Gastrocnemius medialis (tissue), 4 donors: ENCODE measurements at regions of chr7 and their contacts with region 1.

Region 1: GRCh38 chr7:143380255-143380645 is 895 bp upstream of the ZYX start:
- DNase-seq: peak; percentile 66 to 82
- ATAC-seq: peak; percentile 60 to 63
- H3K4me3 ChIP-seq: peak overlapping the region; percentile 78 to 99 (median 86)
- H3K27ac ChIP-seq: peak overlapping the region; percentile 92 to 100 (median 98)
- H3K4me1 ChIP-seq: peaks cover 44 to 47% of the 10 kb centered on the region in 2 donors
- H3K27me3 ChIP-seq: no peaks in the 10 kb centered on the region
- CTCF ChIP-seq: peak; percentile 89 to 95 (median 91)
- POLR2A ChIP-seq: no peak

Region 2: DNA sequence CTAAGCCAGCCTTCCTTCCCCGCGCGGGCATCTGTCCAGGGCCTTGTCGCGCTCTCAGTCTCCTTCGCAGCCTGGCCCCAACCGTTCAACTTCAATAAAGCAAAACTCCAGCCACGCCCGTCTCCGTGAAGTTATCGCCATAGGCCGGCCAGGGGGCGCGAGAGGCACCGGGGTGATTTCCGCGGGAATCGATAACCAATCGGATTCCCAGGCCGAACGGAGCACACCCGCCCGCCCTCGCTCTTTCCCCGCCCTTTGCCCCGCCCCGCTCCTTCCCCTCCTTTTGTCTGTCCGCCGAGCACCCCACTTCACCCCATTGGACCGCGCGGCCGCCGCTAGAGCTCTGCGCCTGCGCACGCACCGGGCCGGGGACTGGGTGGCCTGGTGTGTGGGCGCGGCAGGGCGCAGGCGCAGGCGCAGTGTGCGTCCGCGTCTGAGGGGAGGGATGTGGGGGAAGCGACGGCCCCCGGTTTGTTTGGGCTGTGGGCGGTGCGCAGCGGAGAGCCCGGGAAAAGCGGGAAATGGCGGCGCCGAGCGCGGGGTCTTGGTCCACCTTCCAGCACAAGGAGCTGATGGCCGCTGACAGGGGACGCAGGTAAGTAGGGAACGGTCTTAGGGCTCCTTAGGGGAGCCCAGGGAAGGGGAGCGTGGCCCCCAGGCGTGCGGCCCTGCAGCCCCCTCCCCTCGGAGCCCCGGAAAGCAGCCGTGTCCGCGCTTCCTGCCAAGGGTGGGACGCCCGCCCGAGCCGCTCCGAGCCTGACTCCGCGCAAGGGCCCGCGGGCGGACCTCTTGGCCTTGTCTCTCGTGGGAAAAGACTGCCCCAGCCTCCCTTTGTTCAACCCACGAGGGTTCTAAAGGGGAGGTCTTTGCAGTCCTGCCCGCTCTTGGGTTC is 92.1 kb before region 1 on chr7 and contains the start of gene CASP2:
- in situ Hi-C with region 1: no loop called
- intact Hi-C with region 1: loop called (anchors 2 kb)
- DNase-seq: peak; percentile 94
- ATAC-seq: peak; percentile 89
- H3K4me3 ChIP-seq: peak within 1 kb of the TSS; percentile 79 to 93 (median 86)
- H3K27ac ChIP-seq: peak within 1 kb of the TSS; percentile 74 to 91 (median 88)
- H3K4me1 ChIP-seq: peaks cover 25 to 26% of the 10 kb centered on the region in 2 donors
- H3K27me3 ChIP-seq: no peaks in the 10 kb centered on the region
- CTCF ChIP-seq: peak in 3 of 5 experiments; percentile 7 to 50 (median 47)
- POLR2A ChIP-seq: peak; percentile 40 to 64
- total RNA-seq, gene CASP2: 3.1 to 13.9 (median 4.1) TPM

Region 3: GRCh38 chr7:143331179-143331820 is 49.0 kb before region 1 on chr7:
- in situ Hi-C with region 1: no loop called
- intact Hi-C with region 1: loop called (anchors 5 kb)
- DNase-seq: peak; percentile 76 to 82
- ATAC-seq: peak; percentile 95 to 99
- H3K4me3 ChIP-seq: no peak overlapping the region
- H3K27ac ChIP-seq: peak overlapping the region; percentile 78 to 88 (median 86)
- H3K4me1 ChIP-seq: peaks cover 3 to 31% of the 10 kb centered on the region in 2 donors
- H3K27me3 ChIP-seq: no peaks in the 10 kb centered on the region
- CTCF ChIP-seq: no peak
- POLR2A ChIP-seq: no peak

Region 4: GRCh38 chr7:143355450-143356385 is 24.5 kb before region 1 on chr7:
- in situ Hi-C with region 1: no loop called
- intact Hi-C with region 1: no loop called
- DNase-seq: no peak
- ATAC-seq: no peak
- H3K4me3 ChIP-seq: no peak overlapping the region
- H3K27ac ChIP-seq: no peak overlapping the region
- H3K4me1 ChIP-seq: no peaks in the 10 kb centered on the region
- H3K27me3 ChIP-seq: peaks cover 4 to 13% (median 8%) of the 10 kb centered on the region in 3 donors
- CTCF ChIP-seq: no peak
- POLR2A ChIP-seq: no peak

Region 5: DNA sequence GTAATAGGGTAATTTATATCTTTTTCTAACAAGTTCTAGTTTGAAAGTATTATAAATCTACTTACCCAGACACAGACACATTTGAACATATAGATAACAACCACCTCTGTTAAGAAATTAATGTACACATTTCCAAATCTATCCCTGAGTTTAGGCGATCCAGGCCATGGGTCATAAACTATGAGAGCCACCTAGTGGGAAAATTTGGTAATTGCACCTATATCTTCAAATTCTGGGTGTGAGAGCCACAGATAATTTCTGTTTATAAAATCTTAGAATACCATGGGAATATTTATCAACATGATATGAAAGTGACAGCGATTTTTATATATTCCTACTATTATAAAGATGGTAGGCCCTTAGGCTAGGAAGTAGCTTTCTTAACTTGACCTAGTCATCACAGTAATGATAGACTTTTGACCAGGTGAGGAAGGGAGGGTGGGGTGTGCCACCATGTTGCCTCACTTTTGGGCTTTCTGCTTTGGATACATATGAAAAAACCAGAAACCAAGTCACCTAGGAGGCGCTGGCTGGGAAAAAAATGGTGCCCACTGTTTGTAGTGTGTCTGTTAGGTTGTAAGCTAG is 36.4 kb after region 1 on chr7:
- in situ Hi-C with region 1: loop called in 1 of 4 experiments (anchors 5 kb)
- intact Hi-C with region 1: loop called (anchors 2 kb)
- DNase-seq: no peak
- ATAC-seq: peak; percentile 54 to 70
- H3K4me3 ChIP-seq: no peak overlapping the region
- H3K27ac ChIP-seq: no peak overlapping the region
- H3K4me1 ChIP-seq: no peaks in the 10 kb centered on the region
- H3K27me3 ChIP-seq: no peaks in the 10 kb centered on the region
- CTCF ChIP-seq: peak; percentile 67 to 84 (median 80)
- POLR2A ChIP-seq: no peak

Region 6: GRCh38 chr7:143463556-143463955 is 83.3 kb after region 1 on chr7:
- in situ Hi-C with region 1: no loop called
- intact Hi-C with region 1: no loop called
- DNase-seq: no peak
- ATAC-seq: no peak
- H3K4me3 ChIP-seq: no peak overlapping the region
- H3K27ac ChIP-seq: no peak overlapping the region
- H3K4me1 ChIP-seq: no peaks in the 10 kb centered on the region
- H3K27me3 ChIP-seq: no peaks in the 10 kb centered on the region
- CTCF ChIP-seq: no peak
- POLR2A ChIP-seq: no peak